ENCODE measurements at regions of chr7 and their contacts with region 1.

Region 1: GRCh38 chr7:92425321-92425947 is 21.8 kb upstream of the GATAD1 start:
- DNase-seq: no peak
- H3K4me3 ChIP-seq: no peak overlapping the region
- H3K27ac ChIP-seq: no peak overlapping the region
- H3K4me1 ChIP-seq: no peaks in the 10 kb centered on the region
- H3K27me3 ChIP-seq: peaks cover 3 to 9% of the 10 kb centered on the region in 2 experiments
- CTCF ChIP-seq: peak in 1 of 2 donors; percentile 13
- POLR2A ChIP-seq: no peak

Region 2: DNA sequence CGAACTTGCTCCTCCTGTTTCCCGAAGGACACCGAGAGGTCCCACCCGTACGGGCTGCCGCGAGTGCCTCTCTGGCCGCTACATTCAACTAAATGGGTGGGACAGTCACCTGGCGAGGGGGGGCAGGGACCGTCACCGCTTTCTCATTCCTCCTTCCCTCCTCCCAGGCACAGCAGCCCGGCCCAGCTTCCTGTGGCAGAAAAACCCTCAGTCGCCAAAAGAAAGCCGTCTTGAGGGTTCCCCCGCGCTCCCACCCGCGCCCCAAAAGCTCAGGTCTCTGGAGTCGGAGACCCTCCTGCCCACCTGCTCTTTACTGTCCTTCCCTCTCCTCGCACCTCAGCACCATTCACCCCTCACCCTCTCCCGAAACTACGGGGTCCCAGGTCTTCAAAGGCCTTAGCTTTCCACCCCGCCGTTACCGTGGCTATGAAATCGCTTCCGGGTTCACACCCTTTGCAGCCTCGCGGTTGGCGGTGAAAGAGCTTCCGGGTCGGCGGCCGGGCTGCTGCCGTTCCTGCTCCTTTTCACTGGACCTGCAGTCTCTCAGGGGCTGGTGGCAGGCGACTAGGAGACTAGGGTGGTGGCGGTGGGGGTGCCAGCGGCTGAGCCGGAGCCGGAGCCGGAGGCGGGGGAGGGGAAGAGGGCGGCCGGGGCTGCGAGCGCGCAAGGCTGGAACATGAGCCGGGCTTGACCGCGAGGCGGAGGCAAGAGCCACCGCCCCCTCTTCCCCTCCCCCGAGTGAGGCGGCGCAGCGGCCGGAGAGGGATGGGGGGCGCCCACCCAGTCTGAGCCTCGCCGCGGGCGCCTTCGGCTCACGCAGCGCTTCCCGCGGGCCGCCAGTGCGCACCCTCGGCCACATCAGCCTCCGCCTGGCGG is 179.7 kb before region 1 on chr7 and contains the starts of genes ANKIB1 and KRIT1:
- CTCF ChIA-PET with region 1: interaction called, 4 read pairs
- POLR2A ChIA-PET with region 1: no interaction called
- dilution Hi-C with region 1: no loop called
- intact Hi-C with region 1: loop called (anchors 1 kb)
- DNase-seq: peak; percentile 91
- H3K4me3 ChIP-seq: peak within 1 kb of the TSS; percentile 99
- H3K27ac ChIP-seq: peak within 1 kb of the TSS; percentile 63
- H3K4me1 ChIP-seq: peaks cover 22% of the 10 kb centered on the region
- H3K27me3 ChIP-seq: no peaks in the 10 kb centered on the region
- CTCF ChIP-seq: peak in 1 of 2 donors; percentile 26
- POLR2A ChIP-seq: no peak
- total RNA-seq, gene ANKIB1: 48.4 and 56.5 TPM in 2 replicates
- total RNA-seq, gene KRIT1: 32.9 and 43.7 TPM in 2 replicates

Region 3: GRCh38 chr7:92415225-92415624 is 10.2 kb before region 1 on chr7:
- CTCF ChIA-PET with region 1: interaction called, 32 read pairs
- POLR2A ChIA-PET with region 1: no interaction called
- dilution Hi-C with region 1: no loop called
- intact Hi-C with region 1: no loop called
- DNase-seq: no peak
- H3K4me3 ChIP-seq: no peak overlapping the region
- H3K27ac ChIP-seq: no peak overlapping the region
- H3K4me1 ChIP-seq: no peaks in the 10 kb centered on the region
- H3K27me3 ChIP-seq: peaks cover 7 to 10% of the 10 kb centered on the region in 2 experiments
- CTCF ChIP-seq: no peak
- POLR2A ChIP-seq: no peak

Region 4: GRCh38 chr7:92436612-92437445 is 11.4 kb after region 1 on chr7:
- CTCF ChIA-PET with region 1: interaction called, 13 read pairs
- POLR2A ChIA-PET with region 1: no interaction called
- dilution Hi-C with region 1: no loop called
- intact Hi-C with region 1: no loop called
- DNase-seq: no peak
- H3K4me3 ChIP-seq: no peak overlapping the region
- H3K27ac ChIP-seq: no peak overlapping the region
- H3K4me1 ChIP-seq: no peaks in the 10 kb centered on the region
- H3K27me3 ChIP-seq: peaks cover 8 to 10% of the 10 kb centered on the region in 2 experiments
- CTCF ChIP-seq: no peak
- POLR2A ChIP-seq: no peak

Region 5: GRCh38 chr7:92461027-92462003 is 35.9 kb after region 1 on chr7:
- CTCF ChIA-PET with region 1: interaction called, 28 read pairs
- POLR2A ChIA-PET with region 1: no interaction called
- dilution Hi-C with region 1: no loop called
- intact Hi-C with region 1: loop called (anchors 1 kb)
- DNase-seq: peak; percentile 57
- H3K4me3 ChIP-seq: no peak overlapping the region
- H3K27ac ChIP-seq: no peak overlapping the region
- H3K4me1 ChIP-seq: peaks cover 5% of the 10 kb centered on the region
- H3K27me3 ChIP-seq: no peaks in the 10 kb centered on the region
- CTCF ChIP-seq: peak; percentile 74 to 76
- POLR2A ChIP-seq: no peak

Measured in endothelial cell of umbilical vein (primary cell).